Dorsolateral prefrontal cortex (tissue), 120 donors: ENCODE measurements at regions of chr19 and their contacts with region 1.

Region 1: DNA sequence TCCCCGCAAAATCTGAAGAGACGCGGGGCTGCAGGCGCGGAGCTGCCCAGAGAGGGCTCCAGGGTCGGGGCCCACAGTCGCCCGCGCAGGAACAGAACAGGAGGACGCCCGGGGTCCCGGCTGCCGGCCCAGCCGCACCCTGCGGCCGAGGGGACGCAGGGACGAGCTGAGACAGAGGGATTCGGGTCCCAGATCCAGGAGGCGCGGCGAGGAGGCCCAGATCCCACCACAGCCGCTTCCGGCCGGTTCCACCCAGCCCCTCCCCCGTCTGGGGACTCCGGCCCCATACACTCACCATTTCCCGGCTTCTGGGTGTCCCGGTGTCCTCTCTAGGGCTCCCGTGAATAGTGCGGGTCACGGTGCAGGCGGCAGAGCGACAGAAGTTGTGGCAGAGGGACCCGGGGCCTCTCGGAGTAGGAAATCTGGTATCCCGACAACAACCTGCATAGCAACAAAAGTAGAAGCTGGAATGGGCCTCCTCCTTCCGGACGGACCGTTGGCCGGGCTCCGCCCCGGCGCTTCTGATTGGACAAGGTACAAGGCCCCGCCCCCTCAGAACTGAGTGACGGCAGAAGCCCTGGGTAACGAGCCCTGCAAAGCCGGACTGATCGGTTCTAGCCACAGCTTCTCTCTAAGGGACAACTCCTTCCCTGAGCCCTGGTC is at the start of gene ZNF20:
- DNase-seq: peak; percentile 94 to 98 (median 96)
- H3K4me3 ChIP-seq: peak within 1 kb of the TSS; percentile 61 to 98 (median 87)
- H3K27ac ChIP-seq: peak within 1 kb of the TSS in 54 of 59 donors; percentile 4 to 92 (median 73)
- H3K27me3 ChIP-seq: no peaks in the 10 kb centered on the region
- CTCF ChIP-seq: peak in 26 of 56 donors; percentile 3 to 56 (median 32)
- total RNA-seq, gene ZNF20: 0.81 to 9.8 (median 3.0) TPM in 119 of 120 experiments, not detected in the other

Region 2: GRCh38 chr19:11798391-11799330 is 341.4 kb before region 1 on chr19 and contains the start of gene ZNF491:
- intact Hi-C with region 1: loop called (anchors 2 to 5 kb)
- DNase-seq: peak; percentile 88 to 96 (median 94)
- H3K4me3 ChIP-seq: peak within 1 kb of the TSS; percentile 44 to 93 (median 82)
- H3K27ac ChIP-seq: peak within 1 kb of the TSS in 58 of 59 donors; percentile 1 to 91 (median 76)
- H3K27me3 ChIP-seq: no peaks in the 10 kb centered on the region
- CTCF ChIP-seq: peak in 35 of 56 donors; percentile 4 to 50 (median 24)
- total RNA-seq, gene ZNF491: 3.3 to 10.8 (median 6.0) TPM

Region 3: GRCh38 chr19:11924886-11925650 is 214.9 kb before region 1 on chr19 and contains the start of gene ZNF700:
- intact Hi-C with region 1: loop called (anchors 1 to 5 kb)
- DNase-seq: peak; percentile 90 to 97 (median 96)
- H3K4me3 ChIP-seq: peak within 1 kb of the TSS; percentile 59 to 100 (median 94)
- H3K27ac ChIP-seq: peak within 1 kb of the TSS; percentile 65 to 97 (median 88)
- H3K27me3 ChIP-seq: no peaks in the 10 kb centered on the region
- CTCF ChIP-seq: peak in 17 of 56 donors; percentile 7 to 55 (median 24)
- total RNA-seq, gene ZNF700: 8.4 to 16.2 (median 11.6) TPM

Region 4: GRCh38 chr19:12055783-12056182 is 84.2 kb before region 1 on chr19:
- intact Hi-C with region 1: loop called (anchors 2 to 5 kb)
- DNase-seq: no peak
- H3K4me3 ChIP-seq: no peak overlapping the region
- H3K27ac ChIP-seq: no peak overlapping the region
- H3K27me3 ChIP-seq: peaks cover 0 to 7% (median 0%) of the 10 kb centered on the region in 45 donors
- CTCF ChIP-seq: no peak

Region 5: GRCh38 chr19:12092065-12092867 is 47.8 kb before region 1 on chr19:
- intact Hi-C with region 1: loop called (anchors 2 kb)
- DNase-seq: peak; percentile 31 to 80 (median 60)
- H3K4me3 ChIP-seq: peak overlapping the region; percentile 43 to 79 (median 63)
- H3K27ac ChIP-seq: peak overlapping the region in 35 of 59 donors; percentile 2 to 88 (median 55)
- H3K27me3 ChIP-seq: peaks cover 0 to 3% (median 0%) of the 10 kb centered on the region in 45 donors
- CTCF ChIP-seq: peak in 3 of 56 donors; percentile 6 to 31 (median 14)